CD14-positive monocyte (primary cell): ENCODE measurements at regions of chr11 and their contacts with region 1.

Region 1: DNA sequence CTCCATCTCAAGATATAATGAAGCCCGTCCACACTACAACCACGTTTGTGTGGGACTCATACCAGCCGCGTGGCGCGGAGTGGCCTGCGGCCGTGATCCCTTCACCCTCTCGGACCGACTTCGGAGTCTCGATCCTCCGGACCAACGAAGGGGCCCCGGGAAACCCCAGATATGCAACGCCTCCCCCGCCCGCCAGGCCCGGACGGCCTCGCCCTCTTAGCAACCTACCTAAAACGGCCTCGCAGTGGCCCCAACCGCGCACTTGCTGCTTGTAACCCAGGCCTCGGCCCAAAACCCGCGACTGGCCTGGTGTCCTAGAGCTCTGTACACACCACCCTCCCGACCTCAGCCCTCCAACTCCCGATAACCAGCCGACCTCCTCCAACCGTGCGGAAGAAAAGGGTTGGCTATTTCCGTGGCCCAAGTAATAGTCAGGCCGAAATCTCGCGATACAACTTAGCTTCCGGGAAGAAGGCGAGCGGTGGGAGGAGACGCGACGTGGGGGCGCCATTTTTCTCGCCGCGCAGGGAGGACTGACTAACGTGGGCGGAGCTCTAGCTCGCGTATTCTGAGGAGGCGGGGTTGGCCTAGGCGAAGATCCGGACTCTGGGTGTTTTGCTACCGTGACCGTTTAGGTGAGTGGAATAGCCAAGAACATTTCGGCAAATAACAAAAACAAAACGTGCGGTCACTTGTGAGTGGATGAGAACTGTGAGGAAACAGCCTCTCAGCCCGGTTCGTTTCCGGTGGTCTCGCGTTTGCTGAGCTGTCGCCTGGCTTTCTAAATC is at the starts of genes C11orf54 and TAF1D:
- DNase-seq: peak; percentile 97 to 98 (median 97)
- H3K4me3 ChIP-seq: peak within 1 kb of the TSS; percentile 64 to 97 (median 73)
- H3K4me3 Mint-ChIP-seq: peak within 1 kb of the TSS; percentile 99
- H3K27ac ChIP-seq: peak within 1 kb of the TSS; percentile 88 to 97
- H3K27ac Mint-ChIP-seq: peak within 1 kb of the TSS; percentile 97 to 100 (median 99)
- H3K4me1 ChIP-seq: peaks cover 34 to 40% of the 10 kb centered on the region in 2 donors
- H3K4me1 Mint-ChIP-seq: peaks cover 49% of the 10 kb centered on the region
- H3K27me3 ChIP-seq: no peaks in the 10 kb centered on the region
- H3K27me3 Mint-ChIP-seq: peaks cover 0 to 2% (median 0%) of the 10 kb centered on the region in 3 donors
- CTCF ChIP-seq: no peak
- polyA plus RNA-seq, gene C11orf54: 8.3 to 23.6 (median 14.1) TPM
- polyA plus RNA-seq, gene TAF1D: 5.9 to 68.3 (median 7.4) TPM

Region 2: GRCh38 chr11:93672280-93672679 is 69.0 kb before region 1 on chr11:
- intact Hi-C with region 1: loop called in 1 of 2 experiments (anchors 10 kb)
- DNase-seq: no peak
- H3K4me3 ChIP-seq: no peak overlapping the region
- H3K4me3 Mint-ChIP-seq: no peak overlapping the region
- H3K27ac ChIP-seq: peak overlapping the region in 1 of 2 donors; percentile 22
- H3K27ac Mint-ChIP-seq: peak overlapping the region in 3 of 7 donors; percentile 28 to 88 (median 36)
- H3K4me1 ChIP-seq: no peaks in the 10 kb centered on the region
- H3K4me1 Mint-ChIP-seq: no peaks in the 10 kb centered on the region
- H3K27me3 ChIP-seq: no peaks in the 10 kb centered on the region
- H3K27me3 Mint-ChIP-seq: no peaks in the 10 kb centered on the region
- CTCF ChIP-seq: no peak

Region 3: DNA sequence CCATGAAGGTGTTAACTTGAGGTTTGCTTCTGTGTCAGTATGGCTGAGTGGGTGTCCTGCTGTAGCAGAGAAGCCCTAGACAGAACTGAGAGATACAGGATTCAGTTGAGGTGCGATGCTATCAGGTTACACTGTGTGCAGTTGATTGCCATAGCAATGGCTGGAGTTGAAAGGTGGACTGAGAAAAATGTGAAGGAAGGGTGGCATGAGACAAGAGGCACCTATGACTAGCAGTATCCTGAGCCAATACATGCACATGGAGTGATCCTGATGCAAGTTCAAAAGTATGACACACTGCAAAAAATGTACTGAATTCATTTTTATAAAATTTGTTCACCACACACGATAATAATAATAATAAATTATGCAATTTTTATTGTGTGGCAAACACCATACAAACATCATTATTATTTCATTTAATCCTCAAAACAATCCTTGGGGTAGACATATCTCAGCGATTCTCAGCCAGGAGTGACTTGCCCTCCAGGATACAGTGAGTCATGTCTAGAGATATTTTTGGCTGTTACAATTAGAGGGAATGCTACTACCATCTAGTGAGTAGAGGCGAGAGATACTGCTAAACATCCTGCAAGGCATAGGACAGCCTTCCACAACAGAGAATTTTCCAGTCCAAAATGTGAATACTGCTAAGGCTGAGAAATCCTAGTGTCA is 822.0 kb after region 1 on chr11:
- intact Hi-C with region 1: no loop called
- DNase-seq: peak in 1 of 3 donors; percentile 40
- H3K4me3 ChIP-seq: no peak overlapping the region
- H3K4me3 Mint-ChIP-seq: no peak overlapping the region
- H3K27ac ChIP-seq: no peak overlapping the region
- H3K27ac Mint-ChIP-seq: peak overlapping the region in 3 of 7 donors; percentile 1 to 71 (median 33)
- H3K4me1 ChIP-seq: peaks cover 31 to 43% of the 10 kb centered on the region in 2 donors
- H3K4me1 Mint-ChIP-seq: peaks cover 51% of the 10 kb centered on the region
- H3K27me3 ChIP-seq: no peaks in the 10 kb centered on the region
- H3K27me3 Mint-ChIP-seq: no peaks in the 10 kb centered on the region
- CTCF ChIP-seq: peak; percentile 24